RWPE1 (cell line): ENCODE measurements at regions of chr9 and their contacts with region 1.

Region 1: GRCh38 chr9:105842023-105842644 is 147.8 kb downstream of the TMEM38B start:
- DNase-seq: peak; percentile 74
- H3K27ac ChIP-seq: no peak overlapping the region
- CTCF ChIP-seq: peak; percentile 92

Region 2: GRCh38 chr9:105854026-105854783 is 12.1 kb after region 1 on chr9:
- CTCF ChIA-PET with region 1: interaction called, 10 read pairs
- POLR2A ChIA-PET with region 1: no interaction called
- DNase-seq: no peak
- H3K27ac ChIP-seq: no peak overlapping the region
- CTCF ChIP-seq: no peak

Region 3: DNA sequence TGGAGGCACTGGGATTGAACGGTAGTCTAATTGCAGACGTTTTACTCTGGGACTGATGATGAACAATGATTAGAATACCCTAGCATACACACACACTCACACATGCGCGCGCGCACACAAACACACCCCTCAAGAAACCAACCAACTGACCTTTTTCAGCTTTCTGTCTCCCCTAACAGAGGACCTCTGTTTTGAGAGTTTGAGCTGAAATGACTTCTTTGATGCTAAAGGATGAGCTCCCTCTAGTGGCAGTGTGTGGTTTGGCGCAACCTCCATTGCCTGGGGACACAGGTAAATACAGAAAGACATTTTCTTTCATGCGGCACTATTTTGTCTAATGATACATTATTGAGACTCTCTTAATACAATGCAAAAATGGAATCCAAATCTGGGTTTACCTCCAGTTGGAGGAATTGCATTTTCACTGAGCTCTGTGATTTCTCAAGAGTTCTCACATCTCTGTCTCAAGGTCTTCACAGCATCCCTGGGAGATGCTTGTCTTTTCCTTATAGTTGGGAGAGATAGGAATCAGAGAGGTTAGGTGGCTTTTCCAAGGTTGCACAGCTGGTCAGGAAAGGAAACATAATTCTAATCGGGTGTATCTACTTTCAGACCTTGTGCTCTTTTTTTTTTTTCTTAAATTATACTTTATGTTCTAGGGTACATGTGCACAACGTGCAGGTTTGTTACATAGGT is 39.7 kb after region 1 on chr9:
- CTCF ChIA-PET with region 1: interaction called, 31 read pairs
- POLR2A ChIA-PET with region 1: interaction called, 3 read pairs
- DNase-seq: peak; percentile 75
- H3K27ac ChIP-seq: no peak overlapping the region
- CTCF ChIP-seq: peak; percentile 98

Region 4: DNA sequence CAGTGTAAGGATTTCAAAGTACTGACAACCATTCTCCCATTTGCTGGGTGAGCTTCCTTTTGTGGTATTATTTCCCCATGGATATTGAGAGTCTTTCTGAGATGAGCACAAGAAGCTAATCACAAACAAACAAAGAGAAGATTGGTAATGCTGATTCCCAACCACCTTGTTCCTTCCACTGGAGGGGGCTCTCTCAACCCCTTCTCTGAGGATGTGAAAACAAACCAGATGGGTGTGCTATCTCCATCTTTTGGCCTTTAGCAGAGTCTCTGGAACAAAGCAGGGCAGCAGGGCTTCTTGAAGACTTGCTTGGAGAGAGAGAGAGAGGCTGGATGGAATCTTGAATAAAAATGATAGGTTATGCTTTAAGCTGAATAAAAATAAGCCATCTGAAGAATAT is 444.1 kb after region 1 on chr9:
- CTCF ChIA-PET with region 1: no interaction called
- POLR2A ChIA-PET with region 1: no interaction called
- DNase-seq: no peak
- H3K27ac ChIP-seq: no peak overlapping the region
- CTCF ChIP-seq: no peak